ENCODE measurements at regions of chr9 and their contacts with region 1.

Region 1: DNA sequence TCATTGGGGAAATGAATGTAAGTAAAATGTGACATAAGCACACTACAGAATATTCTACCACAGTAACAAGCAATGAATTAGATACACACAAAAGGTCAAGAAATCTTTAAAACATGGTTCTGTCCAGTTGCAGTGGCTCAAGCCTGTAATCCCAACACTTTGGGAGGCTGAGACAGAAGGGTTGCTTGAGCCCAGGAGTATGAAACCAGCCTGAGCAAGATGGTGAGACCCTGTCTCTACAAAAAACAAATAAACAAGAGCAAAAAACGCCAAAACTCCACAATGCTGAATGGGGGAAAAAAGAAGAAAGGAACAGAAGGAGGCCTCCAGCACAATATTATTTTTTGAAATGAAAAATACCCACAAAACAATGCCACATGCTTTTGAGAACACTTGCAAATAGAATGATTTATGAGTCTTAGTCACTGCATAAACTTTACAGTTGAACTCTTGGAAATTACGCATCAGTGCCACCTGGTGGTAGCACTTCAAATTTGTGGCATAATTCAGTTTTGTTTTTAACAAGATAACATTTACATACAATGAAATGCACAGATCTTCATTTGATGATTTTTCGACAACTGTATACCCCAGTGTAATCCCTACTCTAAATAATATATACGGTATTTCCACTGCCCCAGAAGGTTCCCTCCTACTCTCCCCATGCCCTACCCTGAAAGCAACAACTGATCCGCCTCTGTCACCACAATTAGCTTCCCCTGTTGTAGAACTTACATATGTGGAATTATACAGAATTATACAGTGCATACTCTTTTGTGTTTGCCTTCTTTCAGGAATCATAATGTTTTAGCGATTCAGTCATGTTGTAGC is 14.4 kb upstream of the SPINK4 start:
- DNase-seq: peak; percentile 64
- ATAC-seq: peak; percentile 63
- H3K4me3 ChIP-seq: no peak overlapping the region
- H3K27ac ChIP-seq: no peak overlapping the region
- H3K4me1 ChIP-seq: peaks cover 39% of the 10 kb centered on the region
- H3K27me3 ChIP-seq: no peaks in the 10 kb centered on the region
- CTCF ChIP-seq: peak; percentile 56 to 76 (median 64); a peak in 5 of 6 replicates
- EP300 ChIP-seq: no peak
- POLR2A ChIP-seq: no peak
- RAD21 ChIP-seq: peak; percentile 85

Region 2: GRCh38 chr9:32954642-32955041 is 270.9 kb before region 1 on chr9:
- CTCF ChIA-PET with region 1: no interaction called
- POLR2A ChIA-PET with region 1: no interaction called
- RAD21 ChIA-PET with region 1: no interaction called
- SMC1A ChIA-PET with region 1: no interaction called
- in situ Hi-C with region 1: no loop called
- intact Hi-C with region 1: no loop called
- DNase-seq: no peak
- ATAC-seq: no peak
- H3K4me3 ChIP-seq: no peak overlapping the region
- H3K27ac ChIP-seq: no peak overlapping the region
- H3K4me1 ChIP-seq: no peaks in the 10 kb centered on the region
- H3K27me3 ChIP-seq: no peaks in the 10 kb centered on the region
- CTCF ChIP-seq: no peak
- EP300 ChIP-seq: no peak
- POLR2A ChIP-seq: no peak
- RAD21 ChIP-seq: no peak

Region 3: GRCh38 chr9:33076358-33077004 is 149.1 kb before region 1 on chr9 and contains the start of gene SMU1:
- CTCF ChIA-PET with region 1: interaction called, 142 read pairs
- POLR2A ChIA-PET with region 1: interaction called, 8 read pairs
- RAD21 ChIA-PET with region 1: interaction called, 22 read pairs
- SMC1A ChIA-PET with region 1: interaction called, 84 read pairs
- in situ Hi-C with region 1: loop called (anchors 5 kb)
- intact Hi-C with region 1: loop called (anchors 1 kb)
- DNase-seq: peak; percentile 86
- ATAC-seq: peak; percentile 98
- H3K4me3 ChIP-seq: peak within 1 kb of the TSS; percentile 88
- H3K27ac ChIP-seq: peak within 1 kb of the TSS; percentile 79
- H3K4me1 ChIP-seq: peaks cover 10% of the 10 kb centered on the region; the same call in 1 of the 2 replicates
- H3K27me3 ChIP-seq: no peaks in the 10 kb centered on the region
- CTCF ChIP-seq: no peak
- EP300 ChIP-seq: no peak
- POLR2A ChIP-seq: peak; percentile 94
- RAD21 ChIP-seq: no peak
- polyA plus RNA-seq, gene SMU1: 18.5 to 20.7 TPM

Region 4: DNA sequence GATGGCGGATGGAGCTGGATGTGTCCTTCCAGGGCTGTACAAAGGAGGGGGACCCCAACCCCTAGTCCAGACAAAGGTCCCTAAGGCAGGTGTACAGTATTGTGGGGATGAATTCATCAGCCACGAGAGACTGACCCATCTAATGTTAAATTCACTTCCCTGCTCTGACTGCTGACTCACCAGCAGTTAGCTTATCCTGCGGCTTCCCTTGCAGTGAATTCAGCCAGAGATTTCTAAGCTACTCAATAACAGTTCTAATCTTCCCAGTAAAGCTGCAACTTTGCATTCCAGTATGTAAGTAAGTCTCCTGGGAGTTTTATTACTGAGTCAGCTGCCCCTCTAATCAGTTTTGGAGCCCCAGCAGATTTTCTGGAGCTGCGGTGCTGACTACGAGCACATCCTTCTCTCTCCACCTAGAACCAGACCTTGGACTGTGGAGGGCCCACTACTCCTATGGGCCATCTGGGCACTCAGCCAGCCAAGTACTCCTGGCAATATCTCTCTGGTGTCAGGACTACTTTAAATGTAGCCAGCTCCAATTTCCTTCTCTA is 74.5 kb before region 1 on chr9:
- CTCF ChIA-PET with region 1: interaction called, 8 read pairs
- POLR2A ChIA-PET with region 1: no interaction called
- RAD21 ChIA-PET with region 1: interaction called, 12 read pairs
- SMC1A ChIA-PET with region 1: interaction called, 4 read pairs
- in situ Hi-C with region 1: no loop called
- intact Hi-C with region 1: no loop called
- DNase-seq: no peak
- ATAC-seq: no peak
- H3K4me3 ChIP-seq: no peak overlapping the region
- H3K27ac ChIP-seq: 0 out of 2 replicates have a peak overlapping the region, but pooled peaks have one; percentile 20
- H3K4me1 ChIP-seq: peaks cover 54% of the 10 kb centered on the region
- H3K27me3 ChIP-seq: no peaks in the 10 kb centered on the region
- CTCF ChIP-seq: no peak
- EP300 ChIP-seq: no peak
- POLR2A ChIP-seq: no peak
- RAD21 ChIP-seq: no peak

Region 5: GRCh38 chr9:33172256-33173238 is 53.0 kb before region 1 on chr9:
- CTCF ChIA-PET with region 1: interaction called, 44 read pairs
- POLR2A ChIA-PET with region 1: interaction called, 7 read pairs
- RAD21 ChIA-PET with region 1: interaction called, 17 read pairs
- SMC1A ChIA-PET with region 1: interaction called, 23 read pairs
- in situ Hi-C with region 1: no loop called
- intact Hi-C with region 1: loop called (anchors 2 kb)
- DNase-seq: no peak
- ATAC-seq: no peak
- H3K4me3 ChIP-seq: no peak overlapping the region
- H3K27ac ChIP-seq: no peak overlapping the region
- H3K4me1 ChIP-seq: peaks cover 10% of the 10 kb centered on the region
- H3K27me3 ChIP-seq: no peaks in the 10 kb centered on the region
- CTCF ChIP-seq: no peak
- EP300 ChIP-seq: no peak
- POLR2A ChIP-seq: no peak
- RAD21 ChIP-seq: no peak

Region 6: GRCh38 chr9:33202552-33203201 is 22.9 kb before region 1 on chr9:
- CTCF ChIA-PET with region 1: interaction called, 33 read pairs
- POLR2A ChIA-PET with region 1: interaction called, 3 read pairs
- RAD21 ChIA-PET with region 1: interaction called, 12 read pairs
- SMC1A ChIA-PET with region 1: interaction called, 17 read pairs
- in situ Hi-C with region 1: no loop called
- intact Hi-C with region 1: no loop called
- DNase-seq: peak; percentile 72
- ATAC-seq: peak; percentile 99
- H3K4me3 ChIP-seq: no peak overlapping the region
- H3K27ac ChIP-seq: peak overlapping the region; percentile 31; the same call in 1 of the 2 replicates
- H3K4me1 ChIP-seq: peaks cover 19% of the 10 kb centered on the region
- H3K27me3 ChIP-seq: no peaks in the 10 kb centered on the region
- CTCF ChIP-seq: no peak
- EP300 ChIP-seq: peak in 1 of 2 experiments; percentile 83; a peak in 1 of 4 replicates
- POLR2A ChIP-seq: no peak
- RAD21 ChIP-seq: no peak

Region 7: GRCh38 chr9:33264473-33265177 is 39.1 kb after region 1 on chr9 and contains the starts of genes BAG1 and CHMP5:
- CTCF ChIA-PET with region 1: interaction called, 7 read pairs
- POLR2A ChIA-PET with region 1: interaction called, 3 read pairs
- RAD21 ChIA-PET with region 1: interaction called, 11 read pairs
- SMC1A ChIA-PET with region 1: interaction called, 4 read pairs
- in situ Hi-C with region 1: no loop called
- intact Hi-C with region 1: no loop called
- DNase-seq: peak; percentile 96
- ATAC-seq: peak; percentile 92
- H3K4me3 ChIP-seq: peak within 1 kb of the TSS; percentile 97
- H3K27ac ChIP-seq: peak within 1 kb of the TSS; percentile 98
- H3K4me1 ChIP-seq: peaks cover 8% of the 10 kb centered on the region
- H3K27me3 ChIP-seq: no peaks in the 10 kb centered on the region
- CTCF ChIP-seq: peak; percentile 15 to 31 (median 30); a peak in 2 of 6 replicates
- EP300 ChIP-seq: no peak
- POLR2A ChIP-seq: peak; percentile 86
- RAD21 ChIP-seq: 0 out of 2 replicates have a peak, but pooled peaks have one; percentile 12
- polyA plus RNA-seq, gene BAG1: 11.6 to 43.8 TPM
- polyA plus RNA-seq, gene CHMP5: 121 to 152 TPM

Region 8: DNA sequence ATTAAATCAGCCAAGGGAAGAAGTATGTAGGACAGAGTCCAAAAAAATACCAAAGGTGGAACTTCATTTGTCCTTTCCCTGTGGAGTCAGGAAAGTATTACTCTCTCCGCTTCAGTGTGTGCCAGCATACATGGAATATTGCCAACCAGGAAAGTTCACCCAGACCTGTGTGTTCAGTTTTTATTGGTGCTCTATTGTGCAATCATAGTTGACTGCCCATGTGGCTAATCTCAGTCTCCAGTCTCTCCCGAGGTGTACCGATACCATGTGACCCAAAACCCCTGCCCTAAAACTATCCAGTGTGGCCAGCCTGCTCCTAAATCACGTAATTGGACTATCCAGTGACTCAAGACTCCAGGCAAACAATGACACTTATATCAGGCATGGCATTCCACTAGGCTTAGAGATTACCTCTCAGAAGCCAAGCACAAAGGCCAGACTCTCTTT is 103.6 kb after region 1 on chr9:
- CTCF ChIA-PET with region 1: no interaction called
- POLR2A ChIA-PET with region 1: no interaction called
- RAD21 ChIA-PET with region 1: no interaction called
- SMC1A ChIA-PET with region 1: no interaction called
- in situ Hi-C with region 1: no loop called
- intact Hi-C with region 1: no loop called
- DNase-seq: no peak
- ATAC-seq: no peak
- H3K4me3 ChIP-seq: no peak overlapping the region
- H3K27ac ChIP-seq: no peak overlapping the region
- H3K4me1 ChIP-seq: no peaks in the 10 kb centered on the region
- H3K27me3 ChIP-seq: no peaks in the 10 kb centered on the region
- CTCF ChIP-seq: no peak
- EP300 ChIP-seq: no peak
- POLR2A ChIP-seq: no peak
- RAD21 ChIP-seq: no peak